ENCODE measurements at regions of chr2 and their contacts with region 1.

Region 1: DNA sequence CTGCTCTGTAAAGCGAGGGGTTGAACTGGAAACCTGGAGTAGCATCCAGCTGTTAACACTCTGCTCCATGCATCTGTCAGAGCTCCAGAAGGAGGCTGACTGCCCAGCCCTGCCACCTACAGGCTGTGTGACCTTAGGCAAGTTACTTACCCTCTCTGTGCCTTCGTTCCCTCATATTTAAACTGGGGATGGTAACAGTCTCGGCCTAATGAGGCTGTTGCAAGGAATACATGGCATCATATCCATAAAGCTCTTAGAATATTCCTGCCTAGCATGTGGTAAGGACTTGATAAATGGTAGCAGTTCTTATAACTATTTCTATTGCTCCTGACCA is 80.6 kb downstream of the LRRFIP1 start:
- DNase-seq: no peak
- H3K4me3 Mint-ChIP-seq: no peak overlapping the region
- H3K27ac Mint-ChIP-seq: no peak overlapping the region
- H3K4me1 Mint-ChIP-seq: peaks cover 62% of the 10 kb centered on the region
- H3K27me3 Mint-ChIP-seq: no peaks in the 10 kb centered on the region

Region 2: GRCh38 chr2:237547841-237548416 is 160.1 kb before region 1 on chr2:
- CTCF ChIA-PET with region 1: no interaction called
- POLR2A ChIA-PET with region 1: no interaction called
- DNase-seq: no peak
- H3K4me3 Mint-ChIP-seq: no peak overlapping the region
- H3K27ac Mint-ChIP-seq: no peak overlapping the region
- H3K4me1 Mint-ChIP-seq: no peaks in the 10 kb centered on the region
- H3K27me3 Mint-ChIP-seq: peaks cover 6% of the 10 kb centered on the region

Region 3: GRCh38 chr2:237616734-237617586 is 91.1 kb before region 1 on chr2:
- CTCF ChIA-PET with region 1: no interaction called
- POLR2A ChIA-PET with region 1: no interaction called
- DNase-seq: no peak
- H3K4me3 Mint-ChIP-seq: no peak overlapping the region
- H3K27ac Mint-ChIP-seq: no peak overlapping the region
- H3K4me1 Mint-ChIP-seq: peaks cover 18% of the 10 kb centered on the region
- H3K27me3 Mint-ChIP-seq: peaks cover 12% of the 10 kb centered on the region

Region 4: GRCh38 chr2:237691908-237692600 is 16.0 kb before region 1 on chr2:
- CTCF ChIA-PET with region 1: interaction called, 22 read pairs
- POLR2A ChIA-PET with region 1: interaction called, 143 read pairs
- DNase-seq: peak; percentile 97
- H3K4me3 Mint-ChIP-seq: peak overlapping the region; percentile 93
- H3K27ac Mint-ChIP-seq: peak overlapping the region; percentile 95
- H3K4me1 Mint-ChIP-seq: peaks cover 60% of the 10 kb centered on the region
- H3K27me3 Mint-ChIP-seq: no peaks in the 10 kb centered on the region

Region 5: GRCh38 chr2:237754182-237754581 is 46.1 kb after region 1 on chr2:
- CTCF ChIA-PET with region 1: no interaction called
- POLR2A ChIA-PET with region 1: no interaction called
- DNase-seq: no peak
- H3K4me3 Mint-ChIP-seq: no peak overlapping the region
- H3K27ac Mint-ChIP-seq: no peak overlapping the region
- H3K4me1 Mint-ChIP-seq: peaks cover 22% of the 10 kb centered on the region
- H3K27me3 Mint-ChIP-seq: no peaks in the 10 kb centered on the region

Measured in activated CD4-positive, alpha-beta memory T cell treated with anti-CD3 and anti-CD28 coated beads, Interleukin-2, amount 10 ng/mL, durations not matched to agents 7 days and 5 days (primary cell).